ENCODE measurements at regions of chr2 and their contacts with region 1.

Region 1: DNA sequence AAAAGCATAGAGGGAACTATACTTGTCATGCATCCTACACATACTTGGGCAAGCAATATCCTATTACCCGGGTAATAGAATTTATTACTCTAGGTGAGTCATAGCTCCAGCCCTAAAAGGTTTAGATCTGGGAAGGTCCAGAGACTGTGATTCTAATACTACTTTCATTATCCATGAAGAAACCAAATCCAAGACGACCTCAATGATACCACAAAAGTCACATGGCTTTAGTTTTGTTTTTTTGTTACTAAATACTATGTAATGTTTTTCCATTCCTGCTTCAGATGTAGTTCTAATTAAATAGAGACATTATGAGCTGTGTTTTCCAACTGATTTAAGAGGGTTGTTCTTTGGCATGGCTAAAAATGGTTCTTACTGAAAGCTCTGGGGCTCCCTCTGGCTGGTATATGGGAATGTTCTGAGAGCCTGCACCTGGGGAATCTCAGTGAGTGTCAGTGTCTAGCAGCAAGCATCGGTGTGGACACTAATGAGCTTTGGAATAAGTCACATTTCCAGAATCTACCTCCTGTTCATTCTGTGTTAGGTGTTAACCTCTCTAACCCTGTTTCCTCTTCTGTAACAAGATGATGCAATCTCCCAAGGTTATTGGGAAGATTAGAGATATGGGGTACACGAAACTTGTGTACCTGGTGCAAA is 20.5 kb upstream of the IL1RL2 start:
- DNase-seq: no peak
- H3K4me3 ChIP-seq: no peak overlapping the region
- H3K27ac ChIP-seq: no peak overlapping the region
- H3K4me1 ChIP-seq: no peaks in the 10 kb centered on the region
- H3K27me3 ChIP-seq: no peaks in the 10 kb centered on the region
- CTCF ChIP-seq: peak; percentile 7 to 60 (median 60)
- EP300 ChIP-seq: no peak
- POLR2A ChIP-seq: no peak
- RAD21 ChIP-seq: peak; percentile 69 to 82

Region 2: GRCh38 chr2:102005989-102006885 is 160.1 kb before region 1 on chr2:
- CTCF ChIA-PET with region 1: interaction called, 13 read pairs
- POLR2A ChIA-PET with region 1: no interaction called
- DNase-seq: peak; percentile 9 to 67
- H3K4me3 ChIP-seq: no peak overlapping the region
- H3K27ac ChIP-seq: no peak overlapping the region
- H3K4me1 ChIP-seq: no peaks in the 10 kb centered on the region
- H3K27me3 ChIP-seq: no peaks in the 10 kb centered on the region; a peak in 2 of 7 replicates
- CTCF ChIP-seq: peak; percentile 48 to 84 (median 74)
- EP300 ChIP-seq: no peak
- POLR2A ChIP-seq: no peak
- RAD21 ChIP-seq: peak; percentile 70 to 80

Region 3: GRCh38 chr2:102141970-102142828 is 24.1 kb before region 1 on chr2 and contains the start of gene IL1R1:
- CTCF ChIA-PET with region 1: interaction called, 11 read pairs
- POLR2A ChIA-PET with region 1: no interaction called
- DNase-seq: peak in 1 of 2 experiments; percentile 74
- H3K4me3 ChIP-seq: peak within 1 kb of the TSS; percentile 32 to 71 (median 59)
- H3K27ac ChIP-seq: no peak within 1 kb of the TSS
- H3K4me1 ChIP-seq: peaks cover 0 to 8% (median under 1%) of the 10 kb centered on the region in 4 experiments; a peak in 4 of 7 replicates
- H3K27me3 ChIP-seq: peaks cover 6 to 37% (median 25%) of the 10 kb centered on the region in 4 experiments
- CTCF ChIP-seq: no peak
- EP300 ChIP-seq: no peak
- POLR2A ChIP-seq: peak in 1 of 2 experiments; percentile 39; a peak in 1 of 3 replicates
- RAD21 ChIP-seq: no peak
- total RNA-seq, gene IL1R1: 0.34 and 0.46 TPM in 2 replicates

Region 4: DNA sequence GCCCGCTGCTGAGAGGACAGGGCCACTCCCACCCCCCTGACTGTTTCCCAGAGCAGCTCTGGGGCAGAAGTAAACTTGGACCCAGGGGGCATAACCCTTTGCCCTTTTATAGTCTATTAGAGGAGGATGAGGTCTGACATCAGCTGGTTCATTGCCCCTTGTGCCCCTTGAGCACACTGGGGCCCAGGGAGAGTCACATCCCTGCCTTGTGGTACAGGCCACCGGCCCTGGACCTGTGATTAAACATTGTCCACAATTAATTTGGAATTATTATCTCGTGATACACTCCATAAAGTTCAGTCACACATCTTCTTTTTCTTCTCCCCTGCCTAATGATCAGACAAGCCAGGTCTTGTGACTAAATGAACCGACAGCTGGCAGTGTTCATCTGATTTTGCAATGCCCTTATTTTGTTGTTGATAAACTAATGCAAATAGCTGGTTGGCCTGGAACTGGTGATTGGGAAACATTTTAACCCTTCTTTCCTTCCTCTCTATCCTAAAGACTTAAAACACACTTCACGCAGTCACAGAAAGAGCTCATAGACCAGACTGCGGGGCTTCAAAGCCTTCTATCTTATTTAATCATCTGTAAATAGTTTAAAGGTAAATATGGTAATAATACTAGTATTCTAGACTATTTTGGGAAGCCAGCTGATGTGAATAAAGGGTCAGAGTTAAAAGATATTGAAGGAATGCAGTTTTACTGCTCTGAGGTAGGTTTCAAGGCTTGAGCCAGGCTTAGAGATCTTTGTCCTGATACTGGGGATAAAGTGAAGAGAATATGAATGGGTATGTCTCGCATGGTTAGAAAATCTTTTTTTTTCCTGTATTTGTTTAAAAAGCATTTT is 10.4 kb before region 1 on chr2:
- CTCF ChIA-PET with region 1: interaction called, 16 read pairs
- POLR2A ChIA-PET with region 1: no interaction called
- DNase-seq: no peak
- H3K4me3 ChIP-seq: no peak overlapping the region
- H3K27ac ChIP-seq: no peak overlapping the region
- H3K4me1 ChIP-seq: no peaks in the 10 kb centered on the region
- H3K27me3 ChIP-seq: no peaks in the 10 kb centered on the region
- CTCF ChIP-seq: no peak
- EP300 ChIP-seq: no peak
- POLR2A ChIP-seq: no peak
- RAD21 ChIP-seq: no peak